PC-3 (cell line): ENCODE measurements at regions of chr11 and their contacts with region 1.

Region 1: DNA sequence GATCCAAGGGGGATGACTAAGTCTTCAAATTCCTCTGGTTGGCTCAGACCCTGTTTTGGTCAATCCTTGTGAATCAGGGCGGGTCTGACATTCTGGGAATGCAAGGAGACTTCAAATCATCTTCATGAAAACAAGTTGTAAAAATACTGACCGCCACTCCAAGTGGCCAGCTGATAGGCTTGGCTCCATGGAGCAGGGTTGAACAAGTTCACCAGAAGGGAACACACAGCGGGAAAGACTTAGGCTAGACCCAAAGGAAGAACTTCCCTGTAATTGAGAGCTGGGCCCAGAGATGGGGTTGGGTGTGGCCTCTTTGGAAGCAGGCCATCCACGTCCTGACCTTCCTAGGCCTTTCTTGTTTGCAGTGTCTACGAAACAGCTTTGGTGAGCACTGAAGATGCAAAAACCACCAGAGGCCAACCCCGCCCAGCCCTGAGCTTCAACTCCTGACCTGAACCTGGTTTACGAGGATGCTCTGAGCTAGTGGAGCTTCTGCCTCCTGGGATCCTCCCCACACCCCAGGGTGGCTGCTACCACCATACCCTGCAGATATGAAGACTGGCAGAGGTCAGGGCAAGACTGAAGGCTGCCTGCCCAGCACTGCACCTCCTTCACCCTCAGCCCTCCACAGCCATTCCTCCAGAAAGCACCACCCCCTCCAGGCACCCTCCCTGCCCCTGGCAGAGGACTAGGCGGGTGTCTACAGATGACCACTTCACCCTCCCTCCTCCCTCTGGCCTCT is 26.1 kb downstream of the GDPD5 start:
- DNase-seq: peak; percentile 94
- ATAC-seq: peak; percentile 73
- H3K4me3 ChIP-seq: 0 out of 2 replicates have a peak overlapping the region, but pooled peaks have one; percentile 28
- H3K27ac ChIP-seq: peak overlapping the region; percentile 68
- H3K4me1 ChIP-seq: peaks cover 41% of the 10 kb centered on the region
- H3K27me3 ChIP-seq: no peaks in the 10 kb centered on the region
- CTCF ChIP-seq: no peak

Region 2: GRCh38 chr11:74806267-74806666 is 693.4 kb before region 1 on chr11:
- CTCF ChIA-PET with region 1: no interaction called
- POLR2A ChIA-PET with region 1: no interaction called
- intact Hi-C with region 1: no loop called
- DNase-seq: peak; percentile 51
- ATAC-seq: peak; percentile 40; the same call in 1 of the 2 replicates
- H3K4me3 ChIP-seq: no peak overlapping the region
- H3K27ac ChIP-seq: no peak overlapping the region
- H3K4me1 ChIP-seq: peaks cover 8% of the 10 kb centered on the region
- H3K27me3 ChIP-seq: no peaks in the 10 kb centered on the region
- CTCF ChIP-seq: no peak

Region 3: DNA sequence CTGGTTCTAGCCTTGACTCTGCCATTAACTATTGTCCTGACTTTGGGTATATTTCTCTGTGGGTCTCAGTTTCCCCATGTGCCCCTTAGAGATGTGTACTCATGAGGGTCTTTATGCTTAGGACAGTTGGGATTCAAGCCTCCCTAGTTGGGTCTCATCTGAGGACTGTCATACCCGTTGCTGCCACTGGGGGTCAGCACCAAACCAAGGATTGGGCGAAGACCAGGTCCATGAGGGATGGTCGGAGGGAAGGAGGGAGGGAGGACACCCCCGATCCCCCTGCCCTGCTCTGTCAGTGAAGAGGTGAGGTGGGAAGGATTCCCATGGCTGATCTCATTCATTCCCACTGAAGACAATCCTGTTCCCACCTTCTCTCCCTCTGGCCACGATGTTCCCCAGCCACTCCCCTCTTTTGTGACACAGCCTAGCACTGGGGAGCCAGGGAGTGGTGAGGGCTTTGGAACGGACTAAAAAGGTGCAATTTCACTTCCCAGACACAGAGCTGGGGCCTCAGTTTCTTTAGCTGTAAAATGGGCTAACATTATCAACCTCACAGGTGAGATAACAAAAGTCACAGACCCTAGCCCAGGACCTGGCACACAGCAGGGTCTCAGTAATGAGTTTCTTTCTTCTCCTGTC is 54.2 kb before region 1 on chr11:
- CTCF ChIA-PET with region 1: no interaction called
- POLR2A ChIA-PET with region 1: no interaction called
- intact Hi-C with region 1: loop called (anchors 5 kb)
- DNase-seq: peak; percentile 88
- ATAC-seq: peak; percentile 85
- H3K4me3 ChIP-seq: no peak overlapping the region
- H3K27ac ChIP-seq: no peak overlapping the region
- H3K4me1 ChIP-seq: no peaks in the 10 kb centered on the region
- H3K27me3 ChIP-seq: no peaks in the 10 kb centered on the region
- CTCF ChIP-seq: peak; percentile 99

Region 4: GRCh38 chr11:75525596-75526541 is 26.2 kb after region 1 on chr11 and contains the start of gene GDPD5:
- CTCF ChIA-PET with region 1: interaction called, 11 read pairs
- POLR2A ChIA-PET with region 1: interaction called, 3 read pairs
- intact Hi-C with region 1: loop called (anchors 5 kb)
- DNase-seq: peak; percentile 95
- ATAC-seq: peak; percentile 88
- H3K4me3 ChIP-seq: peak within 1 kb of the TSS; percentile 96
- H3K27ac ChIP-seq: no peak within 1 kb of the TSS
- H3K4me1 ChIP-seq: peaks cover 20% of the 10 kb centered on the region
- H3K27me3 ChIP-seq: no peaks in the 10 kb centered on the region
- CTCF ChIP-seq: peak; percentile 68
- total RNA-seq, gene GDPD5: 21.4 and 31.1 TPM in 2 replicates